ENCODE measurements at regions of chr18 and their contacts with region 1.

Region 1: GRCh38 chr18:3441290-3441689 is 8.7 kb upstream of the TGIF1 start:
- DNase-seq: no peak
- H3K4me3 ChIP-seq: no peak overlapping the region
- H3K27ac ChIP-seq: no peak overlapping the region
- H3K4me1 ChIP-seq: peaks cover under 1% of the 10 kb centered on the region
- H3K27me3 ChIP-seq: no peaks in the 10 kb centered on the region
- CTCF ChIP-seq: no peak
- EP300 ChIP-seq: no peak
- POLR2A ChIP-seq: no peak

Region 2: GRCh38 chr18:3153107-3153704 is 288.1 kb before region 1 on chr18:
- intact Hi-C with region 1: no loop called
- DNase-seq: no peak
- H3K4me3 ChIP-seq: no peak overlapping the region
- H3K27ac ChIP-seq: no peak overlapping the region
- H3K4me1 ChIP-seq: no peaks in the 10 kb centered on the region
- H3K27me3 ChIP-seq: no peaks in the 10 kb centered on the region
- CTCF ChIP-seq: no peak
- EP300 ChIP-seq: no peak
- POLR2A ChIP-seq: no peak

Region 3: GRCh38 chr18:3368193-3368592 is 73.1 kb before region 1 on chr18:
- intact Hi-C with region 1: loop called in 1 of 4 experiments (anchors 5 kb)
- DNase-seq: no peak
- H3K4me3 ChIP-seq: no peak overlapping the region
- H3K27ac ChIP-seq: no peak overlapping the region
- H3K4me1 ChIP-seq: no peaks in the 10 kb centered on the region
- H3K27me3 ChIP-seq: no peaks in the 10 kb centered on the region
- CTCF ChIP-seq: no peak
- EP300 ChIP-seq: no peak
- POLR2A ChIP-seq: no peak

Measured in ovary (tissue), 10 donors.